ENCODE measurements at regions of chr13 and their contacts with region 1.

Region 1: DNA sequence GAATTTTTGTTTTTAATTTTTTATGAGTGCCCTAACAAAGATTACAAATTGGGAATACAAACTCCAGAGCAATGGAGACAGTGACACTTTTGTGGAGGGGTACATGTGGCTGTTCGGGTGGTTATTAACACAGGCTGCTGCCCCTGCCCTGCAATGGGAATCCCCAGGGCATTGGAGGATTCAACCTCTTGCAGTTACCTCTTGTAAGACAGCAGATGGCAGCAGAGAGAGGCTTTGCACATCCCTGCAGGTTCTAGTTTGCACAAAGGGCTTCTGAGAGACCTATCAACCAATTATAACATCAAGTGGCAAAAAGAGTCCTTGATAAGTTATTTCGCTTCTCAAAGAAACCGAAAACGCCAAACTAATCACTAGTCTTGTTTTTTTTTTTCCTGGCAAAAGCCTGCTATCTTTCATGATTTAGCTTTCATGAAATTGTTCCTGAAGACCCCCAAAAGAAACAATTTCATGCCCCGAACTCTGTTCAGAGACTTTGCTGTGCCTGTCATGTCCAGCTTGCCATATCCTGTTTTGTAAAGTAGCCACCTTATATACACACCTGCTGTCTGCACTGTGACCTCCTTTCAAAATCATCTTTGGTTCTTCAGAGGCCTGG is 10.4 kb downstream of the GJB2 start:
- DNase-seq: peak; percentile 37

Region 2: DNA sequence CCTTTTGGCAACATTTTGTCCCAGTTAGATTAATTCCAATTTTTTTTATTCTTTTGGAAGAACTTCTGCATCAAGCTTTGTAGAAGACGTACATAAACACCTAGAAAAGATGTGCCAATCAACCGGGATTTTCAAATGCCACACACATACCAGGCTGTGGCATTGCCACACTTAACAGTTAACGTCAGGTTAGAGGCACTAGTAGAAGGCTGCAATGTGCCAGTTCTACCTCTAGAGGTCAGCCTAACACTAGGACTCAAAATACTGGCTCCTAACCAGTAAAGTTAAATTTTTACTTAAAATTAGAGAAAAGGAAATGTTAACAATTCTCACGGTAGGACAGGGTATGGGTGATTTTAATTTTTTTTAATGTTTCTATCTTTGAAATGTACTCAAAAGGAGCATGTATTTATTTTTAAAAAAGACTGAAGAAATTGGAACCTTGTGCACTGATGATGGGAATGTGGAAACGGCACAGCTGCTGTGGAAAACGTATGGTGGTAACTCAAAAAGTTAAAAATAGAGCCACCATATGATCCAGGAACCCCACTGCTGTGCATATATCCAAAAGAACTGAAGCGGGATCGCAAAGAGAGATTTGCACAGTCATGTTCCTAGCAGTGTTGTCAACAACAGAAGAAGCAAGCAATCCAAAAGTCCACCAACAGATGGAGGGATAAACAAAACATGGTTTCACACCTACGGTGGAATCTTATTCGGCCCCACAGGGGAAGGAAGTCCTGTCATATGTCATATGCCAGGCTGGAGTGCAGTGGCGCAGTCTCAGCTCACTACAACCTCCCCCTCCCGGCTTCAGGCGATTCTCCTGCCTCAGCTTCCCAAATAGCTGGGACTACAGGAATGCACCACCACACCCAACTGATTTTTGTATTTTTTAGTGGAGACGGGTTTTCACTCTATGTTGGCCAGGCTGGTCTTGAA is 313.0 kb after region 1 on chr13:
- in situ Hi-C with region 1: loop called (anchors 25 kb)
- DNase-seq: peak; percentile 40

Region 3: DNA sequence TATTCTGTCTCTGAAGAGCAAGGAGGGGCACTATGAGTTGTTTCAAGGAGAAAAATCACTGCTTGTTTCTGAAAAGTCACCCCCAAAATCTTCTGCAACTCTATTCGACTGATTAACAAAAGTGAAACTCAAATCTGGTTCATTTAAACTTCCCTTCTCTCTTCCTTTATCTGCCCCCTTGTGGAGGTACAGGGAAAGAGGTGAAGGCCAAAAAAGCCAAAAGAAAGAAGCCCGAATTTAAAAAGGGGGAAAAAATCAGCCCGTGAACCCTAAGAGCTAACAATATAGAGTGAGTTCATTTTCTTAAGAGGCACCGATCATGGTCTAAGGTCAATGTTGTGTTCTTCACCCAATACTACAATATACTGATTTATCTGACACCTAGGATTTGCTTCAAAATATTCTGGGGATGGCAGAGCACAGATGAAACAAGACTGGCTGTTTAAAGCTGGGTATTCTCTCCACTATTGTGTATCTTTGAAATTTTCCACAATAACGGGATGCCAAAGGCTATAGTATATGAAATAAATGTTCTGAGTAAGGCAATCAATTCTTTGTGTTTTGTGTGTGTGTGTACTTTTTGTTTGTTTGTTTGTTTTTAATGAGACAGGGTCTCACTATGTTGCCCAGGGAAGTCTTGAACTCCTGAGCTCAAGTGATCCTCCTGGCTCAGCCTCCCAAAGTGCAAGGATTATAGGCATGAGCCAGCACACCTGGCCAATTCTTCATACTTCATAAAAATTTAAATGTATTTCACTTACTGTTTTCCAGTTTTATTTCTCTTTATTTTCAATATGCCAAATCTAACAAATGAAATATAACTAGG is 646.4 kb after region 1 on chr13:
- in situ Hi-C with region 1: loop called (anchors 25 kb)
- DNase-seq: peak; percentile 45

Measured in Caki2 (cell line).